WTC11 (cell line): ENCODE measurements at regions of chr9 and their contacts with region 1.

Region 1: GRCh38 chr9:99824378-99825171 is 2.9 kb downstream of the NR4A3 start:
- DNase-seq: peak; percentile 88
- ATAC-seq: peak; percentile 11
- H3K4me3 Mint-ChIP-seq: peak overlapping the region; percentile 73
- H3K27ac Mint-ChIP-seq: no peak overlapping the region
- H3K4me1 Mint-ChIP-seq: peaks cover 42% of the 10 kb centered on the region
- H3K27me3 Mint-ChIP-seq: peaks cover 95% of the 10 kb centered on the region
- CTCF ChIP-seq: peak; percentile 73

Region 2: GRCh38 chr9:99811598-99812383 is 12.8 kb before region 1 on chr9:
- CTCF ChIA-PET with region 1: interaction called, 10 read pairs
- POLR2A ChIA-PET with region 1: no interaction called
- DNase-seq: no peak
- ATAC-seq: no peak
- H3K4me3 Mint-ChIP-seq: peak overlapping the region; percentile 12; the same call in 1 of the 2 replicates
- H3K27ac Mint-ChIP-seq: 0 out of 2 replicates have a peak overlapping the region, but pooled peaks have one; percentile 24
- H3K4me1 Mint-ChIP-seq: peaks cover 78% of the 10 kb centered on the region
- H3K27me3 Mint-ChIP-seq: no peaks in the 10 kb centered on the region
- CTCF ChIP-seq: no peak

Region 3: DNA sequence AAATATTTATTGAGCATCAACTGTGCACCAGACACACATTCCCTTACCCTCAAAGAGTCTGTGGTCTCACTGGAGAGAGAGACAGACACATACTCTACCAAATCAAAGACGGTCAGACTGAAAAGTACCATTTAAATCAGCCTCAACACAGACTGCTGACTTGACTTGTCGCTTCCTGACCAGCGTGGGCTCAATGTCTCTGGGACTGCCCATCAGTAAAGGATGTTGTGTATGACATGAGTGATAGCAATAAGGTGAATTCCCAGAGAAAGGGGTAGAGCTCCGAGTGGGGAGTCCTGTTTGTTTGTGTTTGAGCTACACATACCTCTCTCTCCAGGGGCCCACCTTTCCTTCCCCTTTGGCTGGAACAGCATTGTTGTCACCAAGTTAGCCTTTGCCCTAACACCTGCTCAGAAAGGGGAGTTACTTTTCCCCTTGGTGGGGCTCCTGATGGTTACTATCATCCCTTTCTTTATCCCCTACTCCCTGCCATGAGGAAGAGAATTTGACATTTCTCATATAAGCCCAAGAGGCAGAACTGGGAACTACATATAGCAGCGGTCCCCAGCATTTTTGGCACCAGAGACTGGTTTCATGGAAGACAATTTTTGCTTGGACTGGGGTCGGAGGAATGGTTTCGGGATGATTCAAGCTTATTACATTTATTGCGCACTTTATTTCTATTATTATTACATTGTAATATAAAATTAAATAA is 31.0 kb after region 1 on chr9:
- CTCF ChIA-PET with region 1: interaction called, 11 read pairs
- POLR2A ChIA-PET with region 1: no interaction called
- DNase-seq: no peak
- ATAC-seq: peak; percentile 74
- H3K4me3 Mint-ChIP-seq: no peak overlapping the region
- H3K27ac Mint-ChIP-seq: no peak overlapping the region
- H3K4me1 Mint-ChIP-seq: peaks cover 9% of the 10 kb centered on the region
- H3K27me3 Mint-ChIP-seq: no peaks in the 10 kb centered on the region
- CTCF ChIP-seq: no peak

Region 4: GRCh38 chr9:99906403-99907207 is 82.0 kb after region 1 on chr9 and contains the start of gene STX17:
- CTCF ChIA-PET with region 1: interaction called, 18 read pairs
- POLR2A ChIA-PET with region 1: interaction called, 3 read pairs
- DNase-seq: peak; percentile 80
- ATAC-seq: peak; percentile 87
- H3K4me3 Mint-ChIP-seq: peak within 1 kb of the TSS; percentile 90
- H3K27ac Mint-ChIP-seq: peak within 1 kb of the TSS; percentile 57
- H3K4me1 Mint-ChIP-seq: peaks cover 36% of the 10 kb centered on the region
- H3K27me3 Mint-ChIP-seq: peaks cover 5% of the 10 kb centered on the region; the same call in 1 of the 2 replicates
- CTCF ChIP-seq: no peak
- total RNA-seq, gene STX17: 22.1 to 23.8 TPM (median 23.2 TPM) in 3 replicates

Region 5: DNA sequence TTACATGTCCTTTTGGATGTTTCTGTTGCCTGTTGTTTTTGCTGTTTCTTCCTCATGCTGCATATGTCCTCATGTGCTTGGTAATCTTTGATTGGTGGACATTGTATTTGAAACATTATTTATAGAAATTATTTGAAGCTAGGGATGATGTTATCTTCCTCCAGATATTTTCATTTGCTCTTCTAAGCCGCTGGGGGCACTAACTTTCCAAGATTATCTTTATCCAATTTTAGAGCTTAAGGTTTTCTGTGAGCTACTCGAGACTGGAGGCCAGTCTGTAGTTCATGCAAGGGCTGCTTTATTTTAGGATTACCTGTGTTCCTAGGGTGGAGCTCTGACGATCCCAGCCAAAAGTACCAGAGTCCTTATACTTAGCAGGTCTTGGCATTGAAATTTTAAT is 122.8 kb after region 1 on chr9:
- CTCF ChIA-PET with region 1: interaction called, 17 read pairs
- POLR2A ChIA-PET with region 1: interaction called, 3 read pairs
- DNase-seq: no peak
- ATAC-seq: peak; percentile 51
- H3K4me3 Mint-ChIP-seq: no peak overlapping the region
- H3K27ac Mint-ChIP-seq: no peak overlapping the region
- H3K4me1 Mint-ChIP-seq: no peaks in the 10 kb centered on the region
- H3K27me3 Mint-ChIP-seq: no peaks in the 10 kb centered on the region
- CTCF ChIP-seq: no peak

Region 6: GRCh38 chr9:99980598-99980997 is 156.0 kb after region 1 on chr9:
- CTCF ChIA-PET with region 1: interaction called, 16 read pairs
- POLR2A ChIA-PET with region 1: no interaction called
- DNase-seq: no peak
- ATAC-seq: no peak
- H3K4me3 Mint-ChIP-seq: no peak overlapping the region
- H3K27ac Mint-ChIP-seq: no peak overlapping the region
- H3K4me1 Mint-ChIP-seq: no peaks in the 10 kb centered on the region; the same call in 1 of the 2 replicates
- H3K27me3 Mint-ChIP-seq: no peaks in the 10 kb centered on the region
- CTCF ChIP-seq: no peak

Region 7: GRCh38 chr9:100011062-100011681 is 186.6 kb after region 1 on chr9:
- CTCF ChIA-PET with region 1: interaction called, 19 read pairs
- POLR2A ChIA-PET with region 1: no interaction called
- DNase-seq: no peak
- ATAC-seq: 0 out of 2 replicates have a peak, but pooled peaks have one; percentile 30
- H3K4me3 Mint-ChIP-seq: no peak overlapping the region
- H3K27ac Mint-ChIP-seq: no peak overlapping the region
- H3K4me1 Mint-ChIP-seq: no peaks in the 10 kb centered on the region
- H3K27me3 Mint-ChIP-seq: no peaks in the 10 kb centered on the region
- CTCF ChIP-seq: peak; percentile 49; the same call in 1 of the 2 replicates

Region 8: DNA sequence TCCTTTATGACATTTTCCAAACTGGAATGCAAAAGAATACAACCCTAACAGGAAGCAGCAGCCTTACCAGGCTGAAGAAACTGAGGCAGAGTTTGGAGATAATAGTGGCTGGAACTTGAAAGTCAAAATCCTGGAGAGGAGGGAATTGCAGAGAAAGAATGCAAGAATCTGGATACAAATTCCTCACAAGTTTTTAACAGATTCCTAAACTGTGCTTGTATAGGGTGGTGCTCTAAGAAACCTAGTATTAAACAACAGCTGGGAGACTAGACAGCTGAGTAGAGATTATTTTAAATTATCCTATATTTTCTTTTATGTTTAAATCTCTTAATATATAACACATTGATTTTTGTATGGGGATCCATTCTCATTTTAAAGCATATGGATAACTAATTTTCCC is 305.2 kb after region 1 on chr9:
- CTCF ChIA-PET with region 1: no interaction called
- POLR2A ChIA-PET with region 1: no interaction called
- DNase-seq: no peak
- ATAC-seq: no peak
- H3K4me3 Mint-ChIP-seq: no peak overlapping the region
- H3K27ac Mint-ChIP-seq: no peak overlapping the region
- H3K4me1 Mint-ChIP-seq: peaks cover 2% of the 10 kb centered on the region; the same call in 1 of the 2 replicates
- H3K27me3 Mint-ChIP-seq: no peaks in the 10 kb centered on the region
- CTCF ChIP-seq: no peak